ENCODE measurements at regions of chr1 and their contacts with region 1.

Region 1: GRCh38 chr1:113307771-113308445 is 82.4 kb upstream of the MAGI3 start:
- DNase-seq: no peak
- H3K4me3 Mint-ChIP-seq: no peak overlapping the region
- H3K27ac Mint-ChIP-seq: peak overlapping the region; percentile 78
- H3K4me1 Mint-ChIP-seq: peaks cover 25% of the 10 kb centered on the region
- H3K27me3 Mint-ChIP-seq: no peaks in the 10 kb centered on the region
- CTCF ChIP-seq: no peak

Region 2: GRCh38 chr1:113255720-113256347 is 52.1 kb before region 1 on chr1:
- CTCF ChIA-PET with region 1: no interaction called
- intact Hi-C with region 1: loop called (anchors 5 kb)
- DNase-seq: peak; percentile 55
- H3K4me3 Mint-ChIP-seq: peak overlapping the region; percentile 63
- H3K27ac Mint-ChIP-seq: peak overlapping the region; percentile 72
- H3K4me1 Mint-ChIP-seq: peaks cover 27% of the 10 kb centered on the region
- H3K27me3 Mint-ChIP-seq: no peaks in the 10 kb centered on the region
- CTCF ChIP-seq: no peak

Region 3: GRCh38 chr1:113389953-113390834 is 82.3 kb after region 1 on chr1 and contains the start of gene MAGI3:
- CTCF ChIA-PET with region 1: no interaction called
- intact Hi-C with region 1: no loop called
- DNase-seq: peak; percentile 96
- H3K4me3 Mint-ChIP-seq: peak within 1 kb of the TSS; percentile 88
- H3K27ac Mint-ChIP-seq: peak within 1 kb of the TSS; percentile 93
- H3K4me1 Mint-ChIP-seq: peaks cover 17% of the 10 kb centered on the region
- H3K27me3 Mint-ChIP-seq: no peaks in the 10 kb centered on the region
- CTCF ChIP-seq: no peak
- total RNA-seq, gene MAGI3: 13.4 and 14.2 TPM in 2 replicates

Measured in Calu3 (cell line).